PC-9 (cell line): ENCODE measurements at regions of chr1 and their contacts with region 1.

Region 1: GRCh38 chr1:241749901-241750695 is 97.9 kb upstream of the EXO1 start:
- DNase-seq: peak; percentile 22 to 95
- H3K4me3 ChIP-seq: peak overlapping the region; percentile 60
- H3K27ac ChIP-seq: peak overlapping the region; percentile 94
- H3K4me1 ChIP-seq: peaks cover 35% of the 10 kb centered on the region
- H3K27me3 ChIP-seq: no peaks in the 10 kb centered on the region
- CTCF ChIP-seq: no peak

Region 2: GRCh38 chr1:241560146-241560848 is 189.8 kb before region 1 on chr1:
- CTCF ChIA-PET with region 1: no interaction called
- POLR2A ChIA-PET with region 1: interaction called, 19 read pairs
- intact Hi-C with region 1: no loop called
- DNase-seq: no peak
- H3K4me3 ChIP-seq: no peak overlapping the region
- H3K27ac ChIP-seq: no peak overlapping the region
- H3K4me1 ChIP-seq: peaks cover 10% of the 10 kb centered on the region; the same call in 1 of the 2 replicates
- H3K27me3 ChIP-seq: no peaks in the 10 kb centered on the region
- CTCF ChIP-seq: no peak

Region 3: GRCh38 chr1:241640029-241640818 is 109.9 kb before region 1 on chr1 and contains the starts of genes CHML and OPN3:
- CTCF ChIA-PET with region 1: interaction called, 5 read pairs
- POLR2A ChIA-PET with region 1: no interaction called
- intact Hi-C with region 1: loop called (anchors 1 kb)
- DNase-seq: peak; percentile 70 to 93
- H3K4me3 ChIP-seq: peak within 1 kb of the TSS; percentile 78
- H3K27ac ChIP-seq: peak within 1 kb of the TSS; percentile 86
- H3K4me1 ChIP-seq: peaks cover 46% of the 10 kb centered on the region
- H3K27me3 ChIP-seq: no peaks in the 10 kb centered on the region
- CTCF ChIP-seq: no peak
- total RNA-seq, gene CHML: 34.6 and 47.8 TPM in 2 replicates
- total RNA-seq, gene OPN3: 53.2 and 62.7 TPM in 2 replicates

Region 4: GRCh38 chr1:241688940-241689368 is 61.1 kb before region 1 on chr1:
- CTCF ChIA-PET with region 1: no interaction called
- POLR2A ChIA-PET with region 1: interaction called, 10 read pairs
- intact Hi-C with region 1: no loop called
- DNase-seq: peak; percentile 34 to 84
- H3K4me3 ChIP-seq: 0 out of 2 replicates have a peak overlapping the region, but pooled peaks have one; percentile 12
- H3K27ac ChIP-seq: peak overlapping the region; percentile 71
- H3K4me1 ChIP-seq: peaks cover 17% of the 10 kb centered on the region
- H3K27me3 ChIP-seq: no peaks in the 10 kb centered on the region
- CTCF ChIP-seq: no peak

Region 5: GRCh38 chr1:241808265-241808664 is 58.2 kb after region 1 on chr1:
- CTCF ChIA-PET with region 1: no interaction called
- POLR2A ChIA-PET with region 1: no interaction called
- intact Hi-C with region 1: loop called (anchors 10 kb)
- DNase-seq: no peak
- H3K4me3 ChIP-seq: no peak overlapping the region
- H3K27ac ChIP-seq: no peak overlapping the region
- H3K4me1 ChIP-seq: peaks cover 17% of the 10 kb centered on the region
- H3K27me3 ChIP-seq: no peaks in the 10 kb centered on the region
- CTCF ChIP-seq: no peak

Region 6: DNA sequence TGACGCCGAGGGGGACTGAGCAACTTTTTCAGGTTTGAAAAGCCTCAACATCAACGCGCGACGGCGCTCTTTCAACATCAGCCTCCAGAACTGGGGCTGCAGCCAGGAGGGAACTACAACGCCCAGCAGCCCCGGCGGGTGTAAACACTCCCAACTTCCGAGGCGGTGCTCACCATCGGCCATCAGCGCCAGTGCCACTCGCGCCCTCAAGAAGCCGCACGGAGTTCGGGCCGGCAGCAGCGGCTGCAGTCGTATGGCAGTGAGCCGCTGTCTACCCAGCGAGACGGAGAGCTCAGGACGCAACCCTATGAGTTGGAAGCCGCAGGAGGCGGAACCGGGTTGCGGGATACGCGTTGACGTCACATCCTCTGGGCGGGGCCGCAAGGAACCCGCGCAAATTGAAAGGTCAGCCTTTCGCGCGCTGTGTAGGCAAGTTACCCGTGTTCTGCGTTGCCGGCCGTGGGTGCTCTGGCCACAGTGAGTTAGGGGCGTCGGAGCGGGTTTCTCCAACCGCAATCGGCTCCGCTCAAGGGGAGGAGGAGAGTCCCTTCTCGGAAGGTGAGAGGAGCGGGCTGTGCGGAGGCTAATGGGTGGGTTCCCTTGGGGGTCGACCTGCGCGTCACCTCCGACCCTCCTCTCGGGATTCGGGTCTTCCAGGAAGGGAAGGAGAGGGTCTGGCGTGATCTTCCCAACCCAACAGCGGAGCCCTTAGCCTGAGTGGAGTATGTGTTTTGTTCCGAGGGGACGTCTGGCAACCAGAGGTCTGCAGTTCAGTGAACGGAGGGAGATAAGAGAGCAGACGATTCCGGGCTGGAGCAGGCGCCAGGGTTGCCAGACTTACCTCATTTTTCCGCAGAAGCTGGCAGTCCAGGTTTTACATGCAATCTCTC is 97.9 kb after region 1 on chr1 and contains the start of gene EXO1:
- CTCF ChIA-PET with region 1: no interaction called
- POLR2A ChIA-PET with region 1: no interaction called
- intact Hi-C with region 1: no loop called
- DNase-seq: peak; percentile 82 to 87
- H3K4me3 ChIP-seq: peak within 1 kb of the TSS; percentile 71
- H3K27ac ChIP-seq: peak within 1 kb of the TSS; percentile 87
- H3K4me1 ChIP-seq: peaks cover 17% of the 10 kb centered on the region
- H3K27me3 ChIP-seq: no peaks in the 10 kb centered on the region
- CTCF ChIP-seq: no peak; the same call in 1 of the 2 replicates
- total RNA-seq, gene EXO1: 28.6 and 32.1 TPM in 2 replicates